OCI-LY7 (cell line): ENCODE measurements at regions of chr4 and their contacts with region 1.

Region 1: DNA sequence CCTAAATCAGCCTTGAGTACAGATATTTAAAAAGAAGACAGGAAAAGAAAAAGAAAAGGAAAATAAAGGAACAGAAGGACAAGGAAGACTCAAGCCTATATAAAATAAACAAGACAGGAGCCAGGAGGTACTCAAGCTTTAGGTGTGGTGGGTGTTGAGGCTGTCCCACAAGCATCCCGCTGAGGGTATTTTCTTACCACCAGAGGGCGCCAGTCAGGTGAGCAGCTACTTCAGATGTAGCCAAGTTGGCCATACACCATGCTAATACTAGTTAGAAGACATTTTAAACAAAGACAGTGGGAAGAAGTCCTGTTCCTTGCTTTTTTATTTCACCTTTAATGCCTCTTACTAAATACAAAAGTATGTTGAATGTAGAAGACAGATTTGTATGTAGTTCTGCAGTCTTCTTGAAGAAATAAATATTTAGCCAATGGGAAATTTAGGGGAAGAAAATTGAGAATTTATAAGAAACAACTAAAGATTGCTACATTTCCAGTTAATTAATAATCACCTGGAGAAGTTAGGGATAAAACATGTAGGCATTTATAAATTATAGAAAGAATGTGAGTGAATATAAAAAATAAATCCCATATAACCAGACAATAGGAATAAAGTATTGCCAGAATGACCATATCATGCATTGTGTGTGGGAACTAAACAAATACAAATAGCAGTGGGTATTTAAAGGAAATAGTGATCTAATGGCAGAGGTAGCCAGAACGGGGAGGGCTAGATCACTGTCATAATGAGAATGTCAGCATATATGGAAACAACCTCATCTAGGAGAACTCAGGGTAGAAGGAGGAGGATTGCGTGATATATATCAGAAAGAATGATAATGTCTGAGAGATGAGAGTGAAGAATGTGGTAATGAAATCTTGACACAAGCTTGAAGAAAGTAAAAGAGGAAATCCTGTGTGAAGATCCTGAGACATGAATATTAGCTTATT is 71.0 kb downstream of the MTHFD2L start:
- DNase-seq: peak; percentile 75
- H3K4me3 ChIP-seq: no peak overlapping the region
- H3K27ac ChIP-seq: no peak overlapping the region
- H3K4me1 ChIP-seq: no peaks in the 10 kb centered on the region
- CTCF ChIP-seq: peak; percentile 98

Region 2: GRCh38 chr4:74109116-74109869 is 119.7 kb before region 1 on chr4:
- CTCF ChIA-PET with region 1: no interaction called
- POLR2A ChIA-PET with region 1: no interaction called
- intact Hi-C with region 1: no loop called
- DNase-seq: no peak
- H3K4me3 ChIP-seq: no peak overlapping the region
- H3K27ac ChIP-seq: no peak overlapping the region
- H3K4me1 ChIP-seq: no peaks in the 10 kb centered on the region
- CTCF ChIP-seq: no peak

Region 3: GRCh38 chr4:74189331-74190043 is 39.5 kb before region 1 on chr4:
- CTCF ChIA-PET with region 1: no interaction called
- POLR2A ChIA-PET with region 1: interaction called, 3 read pairs
- intact Hi-C with region 1: loop called (anchors 5 kb)
- DNase-seq: peak; percentile 70
- H3K4me3 ChIP-seq: no peak overlapping the region
- H3K27ac ChIP-seq: no peak overlapping the region
- H3K4me1 ChIP-seq: no peaks in the 10 kb centered on the region
- CTCF ChIP-seq: peak; percentile 92

Region 4: DNA sequence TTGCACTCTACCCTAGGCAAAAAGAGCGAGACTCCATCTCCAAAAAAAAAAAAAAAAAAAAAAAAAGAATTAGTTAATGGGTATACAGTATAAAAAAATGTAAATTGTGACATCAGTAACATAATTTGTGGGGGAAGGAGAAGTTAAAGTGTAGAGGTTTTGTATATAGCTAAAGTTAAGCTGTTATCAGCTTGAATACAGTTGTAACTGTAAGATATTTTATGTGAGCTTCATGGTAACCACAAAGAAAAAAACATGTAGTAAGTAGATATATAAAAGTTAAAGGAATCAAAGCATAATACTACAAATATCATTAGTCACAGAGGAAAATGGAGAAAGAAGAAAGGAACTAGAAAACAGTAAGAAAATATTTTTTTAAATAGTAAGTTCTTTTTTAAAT is 26.1 kb after region 1 on chr4:
- CTCF ChIA-PET with region 1: no interaction called
- POLR2A ChIA-PET with region 1: interaction called, 10 read pairs
- intact Hi-C with region 1: no loop called
- DNase-seq: no peak
- H3K4me3 ChIP-seq: no peak overlapping the region
- H3K27ac ChIP-seq: no peak overlapping the region
- H3K4me1 ChIP-seq: no peaks in the 10 kb centered on the region
- CTCF ChIP-seq: no peak

Region 5: GRCh38 chr4:74311696-74312313 is 82.8 kb after region 1 on chr4:
- CTCF ChIA-PET with region 1: interaction called, 4 read pairs
- POLR2A ChIA-PET with region 1: interaction called, 5 read pairs
- intact Hi-C with region 1: loop called (anchors 1 kb)
- DNase-seq: peak; percentile 46
- H3K4me3 ChIP-seq: no peak overlapping the region
- H3K27ac ChIP-seq: no peak overlapping the region
- H3K4me1 ChIP-seq: peaks cover 12% of the 10 kb centered on the region
- CTCF ChIP-seq: peak; percentile 82

Region 6: DNA sequence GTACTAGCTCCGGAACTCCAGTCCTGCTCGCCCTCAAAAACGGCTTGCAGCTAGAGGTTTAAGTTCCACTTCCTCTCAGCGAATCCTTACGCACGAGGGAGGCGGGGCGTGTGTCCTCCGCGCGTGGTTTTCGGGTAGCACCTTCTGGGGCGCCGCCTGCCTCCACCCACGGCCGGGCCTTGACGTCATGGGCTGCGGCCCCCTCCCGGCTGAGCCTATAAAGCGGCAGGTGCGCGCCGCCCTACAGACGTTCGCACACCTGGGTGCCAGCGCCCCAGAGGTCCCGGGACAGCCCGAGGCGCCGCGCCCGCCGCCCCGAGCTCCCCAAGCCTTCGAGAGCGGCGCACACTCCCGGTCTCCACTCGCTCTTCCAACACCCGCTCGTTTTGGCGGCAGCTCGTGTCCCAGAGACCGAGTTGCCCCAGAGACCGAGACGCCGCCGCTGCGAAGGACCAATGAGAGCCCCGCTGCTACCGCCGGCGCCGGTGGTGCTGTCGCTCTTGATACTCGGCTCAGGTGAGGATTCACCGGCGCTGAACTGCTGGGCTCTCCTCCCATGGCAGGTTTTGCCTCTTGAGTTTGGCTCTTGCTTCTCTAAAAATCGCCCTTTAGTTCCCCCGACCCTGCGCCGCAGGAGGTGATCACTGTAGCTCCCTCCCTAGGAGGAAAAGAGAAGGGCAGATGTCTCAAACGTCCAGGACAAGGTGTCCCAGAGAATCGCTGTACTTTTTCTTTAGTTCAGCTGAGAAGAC is 216.1 kb after region 1 on chr4 and contains the start of gene AREG:
- CTCF ChIA-PET with region 1: no interaction called
- POLR2A ChIA-PET with region 1: no interaction called
- intact Hi-C with region 1: no loop called
- DNase-seq: peak; percentile 18
- H3K4me3 ChIP-seq: peak within 1 kb of the TSS; percentile 32
- H3K27ac ChIP-seq: no peak within 1 kb of the TSS
- H3K4me1 ChIP-seq: no peaks in the 10 kb centered on the region
- CTCF ChIP-seq: peak; percentile 40
- total RNA-seq, gene AREG: not detected in 2 replicates

Region 7: GRCh38 chr4:76141241-76141640 is 1912.3 kb after region 1 on chr4:
- CTCF ChIA-PET with region 1: no interaction called
- POLR2A ChIA-PET with region 1: no interaction called
- intact Hi-C with region 1: no loop called
- DNase-seq: no peak
- H3K4me3 ChIP-seq: no peak overlapping the region
- H3K27ac ChIP-seq: no peak overlapping the region
- H3K4me1 ChIP-seq: peaks cover 7% of the 10 kb centered on the region
- CTCF ChIP-seq: no peak